Activated B cell treated with CpG ODN at 0.5 μM for 24 hours (primary cell): ENCODE measurements at regions of chrX and their contacts with region 1.

Region 1: GRCh38 chrX:71652405-71652804 is 14.9 kb upstream of the LOC101059915 start:
- DNase-seq: no peak
- ATAC-seq: peak; percentile 60
- H3K4me3 Mint-ChIP-seq: no peak overlapping the region
- H3K27ac Mint-ChIP-seq: no peak overlapping the region
- H3K4me1 Mint-ChIP-seq: peaks cover 14% of the 10 kb centered on the region
- H3K27me3 Mint-ChIP-seq: no peaks in the 10 kb centered on the region
- CTCF ChIP-seq: no peak

Region 2: DNA sequence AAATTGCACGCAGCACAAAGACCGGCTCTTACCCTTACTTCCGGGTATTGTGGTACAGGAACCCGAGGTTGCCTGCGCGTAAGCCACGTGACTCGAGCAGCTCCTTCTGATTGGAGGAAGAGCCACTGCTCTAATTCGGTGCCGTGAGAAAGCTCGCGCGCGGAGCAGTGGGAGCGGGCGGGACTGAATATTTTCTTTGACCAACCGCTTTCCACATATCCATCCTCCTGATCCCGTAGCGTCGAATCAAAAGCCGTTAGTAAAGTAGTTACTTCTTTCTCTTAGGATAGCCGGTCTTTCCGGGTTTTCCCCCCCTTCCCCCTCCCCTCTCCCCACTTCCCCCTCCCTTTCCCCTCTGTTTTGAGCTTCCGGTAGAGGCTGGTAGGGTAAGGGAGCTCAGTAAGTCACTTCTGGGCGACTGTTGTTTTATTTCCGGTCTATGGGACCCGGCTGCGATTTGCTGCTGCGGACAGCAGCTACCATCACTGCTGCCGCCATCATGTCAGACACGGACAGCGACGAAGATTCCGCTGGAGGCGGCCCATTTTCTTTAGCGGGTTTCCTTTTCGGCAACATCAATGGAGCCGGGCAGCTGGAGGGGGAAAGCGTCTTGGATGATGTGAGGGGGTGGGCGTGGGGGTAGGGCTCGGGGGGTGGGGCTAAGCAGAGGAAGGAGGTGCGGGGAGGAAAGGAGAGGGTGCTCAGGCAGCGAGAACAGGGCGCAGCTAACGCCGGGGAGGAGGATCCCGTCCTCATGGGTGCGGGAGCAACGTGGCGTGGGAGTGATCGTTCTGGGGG is 286.3 kb before region 1 on chrX and contains the start of gene TAF1:
- CTCF ChIA-PET with region 1: no interaction called
- POLR2A ChIA-PET with region 1: no interaction called
- intact Hi-C with region 1: no loop called
- DNase-seq: peak; percentile 69
- ATAC-seq: peak; percentile 87
- H3K4me3 Mint-ChIP-seq: peak within 1 kb of the TSS; percentile 99
- H3K27ac Mint-ChIP-seq: peak within 1 kb of the TSS; percentile 99
- H3K4me1 Mint-ChIP-seq: peaks cover 21% of the 10 kb centered on the region
- H3K27me3 Mint-ChIP-seq: no peaks in the 10 kb centered on the region
- CTCF ChIP-seq: no peak
- total RNA-seq, gene TAF1: 64.0 and 70.0 TPM in 2 replicates

Region 3: DNA sequence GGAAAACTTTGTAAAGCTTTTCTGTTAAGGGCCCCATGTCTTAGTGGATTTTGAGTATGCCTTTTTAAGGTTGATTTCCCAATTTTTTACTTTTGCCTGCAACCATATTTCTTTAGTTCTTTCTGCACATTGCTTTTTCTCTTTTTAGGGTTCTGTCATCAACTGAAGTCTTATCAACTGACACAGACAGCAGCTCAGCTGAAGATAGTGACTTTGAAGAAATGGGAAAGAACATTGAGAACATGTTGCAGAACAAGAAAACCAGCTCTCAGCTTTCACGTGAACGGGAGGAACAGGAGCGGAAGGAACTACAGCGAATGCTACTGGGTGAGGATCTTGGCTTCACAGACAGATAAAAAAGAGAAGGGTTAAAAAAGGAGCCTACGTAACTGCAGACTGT is 258.5 kb before region 1 on chrX:
- CTCF ChIA-PET with region 1: no interaction called
- POLR2A ChIA-PET with region 1: no interaction called
- intact Hi-C with region 1: no loop called
- DNase-seq: no peak
- ATAC-seq: no peak
- H3K4me3 Mint-ChIP-seq: no peak overlapping the region
- H3K27ac Mint-ChIP-seq: no peak overlapping the region
- H3K4me1 Mint-ChIP-seq: no peaks in the 10 kb centered on the region
- H3K27me3 Mint-ChIP-seq: no peaks in the 10 kb centered on the region
- CTCF ChIP-seq: no peak

Region 4: GRCh38 chrX:71573591-71573990 is 78.8 kb before region 1 on chrX:
- CTCF ChIA-PET with region 1: no interaction called
- POLR2A ChIA-PET with region 1: no interaction called
- intact Hi-C with region 1: loop called (anchors 5 kb)
- DNase-seq: no peak
- ATAC-seq: no peak
- H3K4me3 Mint-ChIP-seq: no peak overlapping the region
- H3K27ac Mint-ChIP-seq: no peak overlapping the region
- H3K4me1 Mint-ChIP-seq: no peaks in the 10 kb centered on the region
- H3K27me3 Mint-ChIP-seq: no peaks in the 10 kb centered on the region
- CTCF ChIP-seq: no peak

Region 5: DNA sequence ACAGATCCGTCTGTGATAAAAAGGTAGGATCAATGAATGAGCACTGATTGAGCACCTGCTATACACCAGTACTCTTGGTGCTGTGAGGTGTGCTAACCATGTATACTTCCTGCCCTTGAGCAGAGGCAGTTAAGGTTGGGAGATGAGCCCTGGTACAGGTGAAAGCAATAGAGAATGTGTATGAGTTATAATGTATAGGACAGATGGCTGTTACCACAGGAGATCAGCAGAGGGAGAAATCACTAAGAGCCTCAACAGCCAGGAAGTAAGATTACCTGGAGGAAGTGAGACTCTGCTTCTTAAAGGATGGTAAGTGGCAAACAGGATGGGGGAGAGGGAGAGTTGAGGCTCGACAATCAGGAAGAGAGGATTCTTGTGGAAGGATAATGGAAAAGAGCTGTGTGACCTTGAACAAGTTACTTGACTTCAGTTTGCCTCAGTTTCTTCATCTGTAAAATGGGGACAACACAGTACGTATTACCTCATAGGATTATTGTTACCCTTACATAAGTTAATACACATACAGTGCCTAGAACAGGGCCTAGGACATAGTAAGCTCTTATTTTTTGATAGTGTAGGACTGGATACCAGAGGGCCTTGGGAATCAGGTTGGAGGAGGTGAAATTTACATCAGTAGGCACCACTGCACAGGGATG is 43.2 kb before region 1 on chrX:
- CTCF ChIA-PET with region 1: interaction called, 9 read pairs
- POLR2A ChIA-PET with region 1: no interaction called
- intact Hi-C with region 1: loop called (anchors 1 kb)
- DNase-seq: no peak
- ATAC-seq: no peak
- H3K4me3 Mint-ChIP-seq: no peak overlapping the region
- H3K27ac Mint-ChIP-seq: peak overlapping the region; percentile 42
- H3K4me1 Mint-ChIP-seq: peaks cover 29% of the 10 kb centered on the region
- H3K27me3 Mint-ChIP-seq: no peaks in the 10 kb centered on the region
- CTCF ChIP-seq: no peak

Region 6: DNA sequence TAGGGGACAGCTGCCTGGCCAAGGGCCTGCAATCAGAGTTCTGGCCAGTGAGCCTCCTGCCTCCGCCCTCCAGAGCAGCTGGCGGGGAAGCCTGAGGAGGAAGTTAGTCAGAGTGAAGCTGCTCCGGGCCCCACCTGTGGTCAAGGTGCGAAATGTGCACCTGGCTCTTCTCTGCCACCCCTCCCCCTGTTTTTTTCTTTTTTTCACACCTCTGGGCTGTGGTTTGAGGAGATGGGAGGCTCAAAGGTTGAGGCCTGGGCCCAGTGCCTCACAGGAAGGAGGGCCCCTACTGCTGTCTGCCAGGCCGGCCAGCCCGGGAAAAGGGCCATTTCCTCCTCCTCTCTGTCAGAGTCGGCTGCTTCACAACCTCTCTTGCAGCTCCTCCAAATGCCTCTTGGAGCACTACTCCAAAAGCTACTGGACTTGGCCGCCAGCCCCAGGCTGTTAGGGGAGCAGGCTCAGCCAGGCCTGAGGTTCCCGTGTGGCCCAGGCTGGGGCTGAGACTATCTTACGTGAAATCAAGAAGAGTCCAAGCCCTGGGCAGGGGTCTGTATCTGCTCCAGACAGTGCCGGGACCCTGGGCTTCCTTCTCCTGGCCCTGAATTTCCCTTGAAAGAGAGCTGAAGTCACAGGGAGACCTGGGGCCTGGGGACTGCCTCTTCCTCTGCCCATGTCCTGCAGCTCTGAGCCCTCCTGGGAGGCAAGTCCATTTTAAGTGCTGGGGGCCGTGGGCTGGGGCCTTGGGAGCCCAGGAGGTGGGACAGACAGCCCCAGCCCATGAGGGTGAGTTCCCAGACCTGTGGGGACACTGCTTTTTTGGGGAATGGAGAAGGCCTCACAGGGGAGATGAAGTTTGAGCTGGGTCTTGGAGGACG is 29.6 kb before region 1 on chrX:
- CTCF ChIA-PET with region 1: interaction called, 5 read pairs
- POLR2A ChIA-PET with region 1: interaction called, 4 read pairs
- intact Hi-C with region 1: loop called (anchors 2 kb)
- DNase-seq: peak; percentile 25
- ATAC-seq: peak; percentile 45
- H3K4me3 Mint-ChIP-seq: peak overlapping the region; percentile 57
- H3K27ac Mint-ChIP-seq: peak overlapping the region; percentile 73
- H3K4me1 Mint-ChIP-seq: peaks cover 63% of the 10 kb centered on the region
- H3K27me3 Mint-ChIP-seq: no peaks in the 10 kb centered on the region
- CTCF ChIP-seq: no peak

Region 7: GRCh38 chrX:71636438-71637252 is 15.8 kb before region 1 on chrX:
- CTCF ChIA-PET with region 1: no interaction called
- POLR2A ChIA-PET with region 1: no interaction called
- intact Hi-C with region 1: no loop called
- DNase-seq: no peak
- ATAC-seq: peak; percentile 80
- H3K4me3 Mint-ChIP-seq: no peak overlapping the region
- H3K27ac Mint-ChIP-seq: no peak overlapping the region
- H3K4me1 Mint-ChIP-seq: peaks cover 17% of the 10 kb centered on the region
- H3K27me3 Mint-ChIP-seq: no peaks in the 10 kb centered on the region
- CTCF ChIP-seq: no peak

Region 8: DNA sequence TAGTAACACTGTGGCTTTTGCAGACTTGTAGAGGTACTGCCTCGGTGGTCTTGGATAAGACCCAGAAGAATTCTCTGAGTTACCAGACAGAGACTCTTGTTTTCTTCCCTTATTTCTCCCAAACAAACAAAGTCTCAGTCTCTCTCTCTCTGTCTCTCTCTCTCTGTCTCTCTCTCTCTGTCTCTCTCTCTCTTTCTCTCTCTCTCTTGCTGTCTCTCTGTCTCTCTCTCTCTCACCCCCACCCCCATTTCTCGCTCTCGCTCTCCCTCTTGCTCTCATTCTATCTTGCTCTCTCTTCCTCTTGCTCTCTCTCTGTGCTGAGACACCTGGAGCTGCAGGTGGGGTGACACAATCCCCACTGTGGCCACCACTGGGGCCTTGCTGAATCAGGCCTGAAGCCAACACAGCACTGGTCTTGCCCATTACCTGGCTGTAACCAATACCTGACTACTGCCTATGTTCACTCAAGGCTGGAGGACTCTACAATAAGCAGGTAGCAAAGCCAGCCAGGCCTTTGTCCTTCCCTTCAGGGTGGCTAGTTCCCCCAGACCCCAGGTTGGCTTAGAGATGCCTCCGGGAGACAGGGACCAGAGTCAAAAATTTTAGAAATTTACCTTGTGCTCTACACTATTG is 27.3 kb after region 1 on chrX:
- CTCF ChIA-PET with region 1: no interaction called
- POLR2A ChIA-PET with region 1: no interaction called
- intact Hi-C with region 1: no loop called
- DNase-seq: no peak
- ATAC-seq: no peak
- H3K4me3 Mint-ChIP-seq: no peak overlapping the region
- H3K27ac Mint-ChIP-seq: no peak overlapping the region
- H3K4me1 Mint-ChIP-seq: no peaks in the 10 kb centered on the region
- H3K27me3 Mint-ChIP-seq: no peaks in the 10 kb centered on the region
- CTCF ChIP-seq: no peak